Caco-2 (cell line): ENCODE measurements at regions of chr10 and their contacts with region 1.

Region 1: DNA sequence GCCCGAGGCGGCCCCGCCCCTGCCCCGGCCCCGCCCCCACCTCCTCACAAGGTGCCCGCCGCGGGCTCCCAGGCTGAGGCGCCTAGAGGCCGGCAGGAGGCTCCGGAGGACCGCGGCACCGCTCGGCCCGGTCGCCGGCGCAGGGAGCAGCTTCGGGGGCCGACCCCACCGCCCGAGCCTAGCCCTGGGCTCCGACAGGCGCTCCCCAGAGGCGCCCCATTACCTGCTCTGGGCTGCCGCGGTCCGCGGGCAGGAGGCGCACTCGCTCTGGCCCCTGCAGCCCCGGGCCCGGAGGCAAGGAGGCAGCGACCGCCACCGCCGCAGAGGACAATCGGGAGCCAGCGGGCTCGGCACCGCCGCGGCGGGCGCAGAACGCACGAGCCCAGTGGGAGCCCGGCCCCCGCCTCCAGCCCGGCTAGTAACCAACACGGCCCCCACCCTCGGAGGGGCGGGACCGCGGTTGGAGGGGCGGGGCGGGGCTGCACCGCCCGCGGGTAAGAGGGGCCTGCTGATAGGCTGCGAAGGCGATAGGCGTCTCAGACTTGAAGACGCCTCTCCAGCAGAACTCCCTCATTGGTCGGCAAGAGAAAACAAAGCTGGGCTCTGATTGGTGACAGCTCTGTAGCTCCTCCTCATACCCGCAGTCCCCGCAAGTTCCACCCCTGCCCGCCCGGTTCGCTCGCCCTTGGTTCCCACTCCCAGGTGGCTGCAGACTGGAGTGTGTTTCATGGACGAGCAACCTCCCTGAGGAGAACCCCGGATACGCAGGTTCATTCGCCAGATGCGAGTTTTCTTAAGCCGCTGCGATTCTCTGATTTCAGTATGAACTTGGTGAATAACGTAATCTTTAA is at the start of gene MPP7:
- DNase-seq: peak; percentile 100
- H3K4me3 ChIP-seq: peak within 1 kb of the TSS; percentile 75
- H3K4me3 Mint-ChIP-seq: peak within 1 kb of the TSS; percentile 73
- H3K27ac Mint-ChIP-seq: peak within 1 kb of the TSS; percentile 81
- H3K4me1 ChIP-seq: peaks cover 30% of the 10 kb centered on the region
- H3K4me1 Mint-ChIP-seq: peaks cover 43% of the 10 kb centered on the region
- H3K27me3 ChIP-seq: no peaks in the 10 kb centered on the region
- H3K27me3 Mint-ChIP-seq: no peaks in the 10 kb centered on the region
- CTCF ChIP-seq: peak; percentile 55 to 59
- total RNA-seq, gene MPP7: 72.0 and 79.4 TPM in 2 replicates

Region 2: DNA sequence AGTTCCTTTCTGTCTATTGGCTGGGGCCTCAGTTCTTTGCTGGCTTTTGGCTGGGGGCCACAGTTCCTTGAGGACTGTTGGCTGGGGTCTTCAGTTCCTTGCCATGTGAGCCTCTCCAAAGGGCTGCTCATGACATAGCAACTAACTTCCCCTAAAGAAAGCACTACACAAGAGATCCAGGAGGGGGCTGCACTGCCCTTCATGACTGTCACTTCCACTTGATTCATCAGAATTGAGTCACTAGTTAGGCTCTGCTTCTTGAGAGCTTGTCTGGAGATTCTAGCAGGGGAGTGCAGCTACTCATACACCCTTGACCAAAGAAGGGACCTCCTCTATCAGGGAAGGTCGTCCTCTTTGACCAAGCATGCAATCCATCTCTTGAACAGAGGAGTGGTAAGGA is 519.2 kb before region 1 on chr10:
- CTCF ChIA-PET with region 1: no interaction called
- POLR2A ChIA-PET with region 1: no interaction called
- intact Hi-C with region 1: no loop called
- DNase-seq: peak; percentile 51 to 52
- H3K4me3 ChIP-seq: no peak overlapping the region
- H3K4me3 Mint-ChIP-seq: no peak overlapping the region
- H3K27ac Mint-ChIP-seq: no peak overlapping the region
- H3K4me1 ChIP-seq: no peaks in the 10 kb centered on the region
- H3K4me1 Mint-ChIP-seq: no peaks in the 10 kb centered on the region
- H3K27me3 ChIP-seq: no peaks in the 10 kb centered on the region
- H3K27me3 Mint-ChIP-seq: peaks cover 39% of the 10 kb centered on the region
- CTCF ChIP-seq: peak; percentile 35 to 72

Region 3: DNA sequence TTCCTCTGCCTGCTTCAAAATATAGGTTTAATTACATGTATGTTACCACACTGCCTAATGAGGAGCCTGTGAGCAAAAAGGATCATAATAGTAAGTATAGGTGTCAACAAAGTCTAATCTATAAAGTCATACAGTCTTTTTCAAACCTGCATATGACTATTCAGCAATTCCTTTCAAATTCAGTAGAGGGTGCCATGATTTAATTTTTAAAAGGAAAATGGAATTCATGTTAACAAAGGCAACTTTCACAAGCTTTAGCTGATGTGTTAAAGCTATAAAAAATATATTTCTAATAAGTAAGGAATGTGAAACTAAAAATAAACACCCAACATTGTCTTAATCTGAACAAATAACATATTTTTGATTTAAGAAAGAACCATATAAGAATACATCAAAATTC is 52.1 kb before region 1 on chr10:
- CTCF ChIA-PET with region 1: interaction called, 63 read pairs
- POLR2A ChIA-PET with region 1: interaction called, 11 read pairs
- intact Hi-C with region 1: loop called (anchors 1 kb)
- DNase-seq: peak in 1 of 2 experiments; percentile 28
- H3K4me3 ChIP-seq: no peak overlapping the region
- H3K4me3 Mint-ChIP-seq: no peak overlapping the region
- H3K27ac Mint-ChIP-seq: no peak overlapping the region
- H3K4me1 ChIP-seq: 0 out of 2 replicates have a peak, but pooled peaks cover 4% of the 10 kb centered on the region
- H3K4me1 Mint-ChIP-seq: peaks cover 12% of the 10 kb centered on the region
- H3K27me3 ChIP-seq: no peaks in the 10 kb centered on the region
- H3K27me3 Mint-ChIP-seq: no peaks in the 10 kb centered on the region
- CTCF ChIP-seq: peak; percentile 51 to 71

Region 4: DNA sequence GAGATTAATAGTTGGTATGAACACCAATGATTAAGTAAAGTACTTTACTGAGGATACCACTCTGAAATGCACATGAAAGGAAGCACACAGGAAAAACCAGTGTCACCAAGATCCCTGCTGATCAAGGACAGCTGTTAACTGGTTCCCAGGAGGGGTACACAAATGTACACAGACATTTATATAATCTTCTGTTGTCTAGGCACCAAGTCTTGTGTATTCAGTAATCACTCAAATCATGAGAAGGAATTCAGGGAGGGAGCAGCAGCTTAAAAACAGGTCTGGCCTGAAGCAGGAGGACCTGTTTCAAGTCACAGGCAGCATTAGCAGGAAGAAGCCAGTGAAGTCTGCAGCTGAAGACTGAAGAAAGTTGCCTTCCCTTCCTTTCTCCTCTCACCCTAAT is 18.7 kb before region 1 on chr10:
- CTCF ChIA-PET with region 1: interaction called, 10 read pairs
- POLR2A ChIA-PET with region 1: interaction called, 16 read pairs
- intact Hi-C with region 1: loop called (anchors 1 kb)
- DNase-seq: peak; percentile 79 to 82
- H3K4me3 ChIP-seq: no peak overlapping the region
- H3K4me3 Mint-ChIP-seq: peak overlapping the region; percentile 23
- H3K27ac Mint-ChIP-seq: peak overlapping the region; percentile 48
- H3K4me1 ChIP-seq: peaks cover 23% of the 10 kb centered on the region
- H3K4me1 Mint-ChIP-seq: peaks cover 52% of the 10 kb centered on the region
- H3K27me3 ChIP-seq: no peaks in the 10 kb centered on the region
- H3K27me3 Mint-ChIP-seq: no peaks in the 10 kb centered on the region
- CTCF ChIP-seq: no peak

Region 5: DNA sequence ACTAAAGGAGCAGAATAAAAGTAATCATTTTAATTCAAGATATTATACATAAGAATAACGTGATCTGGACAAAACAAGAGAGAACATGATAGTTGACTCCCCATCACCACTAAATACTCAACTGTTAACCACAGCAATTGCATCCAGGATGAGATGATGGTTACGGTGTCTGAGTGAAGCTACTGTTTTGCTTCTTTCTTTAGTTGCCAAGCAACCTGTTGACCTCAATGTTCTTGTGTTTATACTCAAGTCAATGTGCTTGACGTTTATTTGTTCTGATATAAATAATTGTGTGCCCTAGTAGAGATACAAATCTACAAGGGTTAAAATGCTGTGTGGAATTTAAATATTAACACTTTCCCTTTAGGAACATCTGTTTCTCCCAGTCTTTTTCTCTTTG is 31.4 kb after region 1 on chr10:
- CTCF ChIA-PET with region 1: interaction called, 24 read pairs
- POLR2A ChIA-PET with region 1: interaction called, 48 read pairs
- intact Hi-C with region 1: loop called (anchors 1 kb)
- DNase-seq: peak in 1 of 2 experiments; percentile 53
- H3K4me3 ChIP-seq: no peak overlapping the region
- H3K4me3 Mint-ChIP-seq: peak overlapping the region; percentile 70
- H3K27ac Mint-ChIP-seq: peak overlapping the region; percentile 83
- H3K4me1 ChIP-seq: peaks cover 26% of the 10 kb centered on the region
- H3K4me1 Mint-ChIP-seq: peaks cover 29% of the 10 kb centered on the region
- H3K27me3 ChIP-seq: no peaks in the 10 kb centered on the region
- H3K27me3 Mint-ChIP-seq: no peaks in the 10 kb centered on the region
- CTCF ChIP-seq: no peak

Region 6: GRCh38 chr10:28375399-28376369 is 72.8 kb after region 1 on chr10:
- CTCF ChIA-PET with region 1: interaction called, 174 read pairs
- POLR2A ChIA-PET with region 1: interaction called, 48 read pairs
- intact Hi-C with region 1: loop called (anchors 1 kb)
- DNase-seq: peak; percentile 91 to 94
- H3K4me3 ChIP-seq: no peak overlapping the region
- H3K4me3 Mint-ChIP-seq: peak overlapping the region; percentile 58
- H3K27ac Mint-ChIP-seq: peak overlapping the region; percentile 80
- H3K4me1 ChIP-seq: peaks cover 42% of the 10 kb centered on the region
- H3K4me1 Mint-ChIP-seq: peaks cover 69% of the 10 kb centered on the region
- H3K27me3 ChIP-seq: no peaks in the 10 kb centered on the region
- H3K27me3 Mint-ChIP-seq: no peaks in the 10 kb centered on the region
- CTCF ChIP-seq: no peak

Region 7: DNA sequence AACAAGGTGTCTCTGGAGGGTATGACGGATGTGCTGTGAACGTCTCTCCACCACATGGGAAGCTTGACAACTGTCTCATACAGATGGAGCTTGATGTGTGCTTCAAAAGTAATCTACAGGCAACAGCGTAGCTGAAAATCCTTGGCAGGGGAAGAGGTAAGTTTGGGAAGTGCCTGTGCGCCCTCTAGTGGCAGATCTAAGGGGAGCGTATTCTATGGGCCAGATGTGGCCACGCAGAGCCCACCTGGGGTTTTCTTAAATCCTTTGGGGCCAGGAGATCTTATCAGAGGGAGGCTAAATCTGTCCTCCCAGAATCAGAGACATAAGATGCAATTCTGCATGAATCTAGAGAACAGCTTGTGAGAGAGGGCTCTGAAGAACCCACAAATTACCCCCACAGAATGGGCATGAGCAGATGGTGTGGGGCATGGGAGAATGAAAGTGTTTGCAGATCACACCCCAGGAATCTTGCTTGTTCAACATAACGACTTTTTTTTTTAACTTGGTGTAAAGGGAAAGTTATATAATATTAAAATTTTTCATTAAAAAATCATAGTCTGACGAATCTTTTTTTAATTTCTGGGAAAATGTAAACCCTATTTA is 91.2 kb after region 1 on chr10:
- CTCF ChIA-PET with region 1: interaction called, 46 read pairs
- POLR2A ChIA-PET with region 1: interaction called, 10 read pairs
- intact Hi-C with region 1: no loop called
- DNase-seq: peak; percentile 79 to 82
- H3K4me3 ChIP-seq: no peak overlapping the region
- H3K4me3 Mint-ChIP-seq: no peak overlapping the region
- H3K27ac Mint-ChIP-seq: no peak overlapping the region
- H3K4me1 ChIP-seq: no peaks in the 10 kb centered on the region
- H3K4me1 Mint-ChIP-seq: peaks cover 8% of the 10 kb centered on the region
- H3K27me3 ChIP-seq: no peaks in the 10 kb centered on the region
- H3K27me3 Mint-ChIP-seq: no peaks in the 10 kb centered on the region
- CTCF ChIP-seq: peak; percentile 99

Region 8: GRCh38 chr10:28479425-28479865 is 176.6 kb after region 1 on chr10:
- CTCF ChIA-PET with region 1: no interaction called
- POLR2A ChIA-PET with region 1: no interaction called
- intact Hi-C with region 1: no loop called
- DNase-seq: no peak
- H3K4me3 ChIP-seq: no peak overlapping the region
- H3K4me3 Mint-ChIP-seq: no peak overlapping the region
- H3K27ac Mint-ChIP-seq: no peak overlapping the region
- H3K4me1 ChIP-seq: no peaks in the 10 kb centered on the region
- H3K4me1 Mint-ChIP-seq: no peaks in the 10 kb centered on the region
- H3K27me3 ChIP-seq: no peaks in the 10 kb centered on the region
- H3K27me3 Mint-ChIP-seq: no peaks in the 10 kb centered on the region
- CTCF ChIP-seq: no peak